Lower leg skin (tissue), 4 donors: ENCODE measurements at regions of chr15 and their contacts with region 1.

Region 1: DNA sequence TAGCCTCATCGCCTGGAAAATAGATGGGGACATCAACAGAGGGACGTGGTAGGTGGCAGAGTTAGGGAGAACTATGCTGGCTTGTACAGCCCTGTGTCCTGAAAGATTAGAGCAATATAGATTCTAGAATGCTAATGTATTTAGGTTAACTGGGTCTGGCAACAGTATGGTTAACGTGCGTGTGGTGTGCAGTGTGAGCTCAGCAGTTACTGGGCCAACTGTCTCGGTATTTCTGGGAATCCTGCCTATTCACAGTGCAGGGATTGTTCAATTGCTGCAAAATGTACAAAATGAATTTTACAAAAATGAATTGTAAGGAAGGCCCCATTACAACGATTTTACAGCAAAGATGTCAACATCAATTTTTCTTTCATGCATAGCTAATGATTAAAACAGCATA is 20.6 kb downstream of the MEIS2 start:
- DNase-seq: no peak
- H3K4me3 ChIP-seq: no peak overlapping the region
- CTCF ChIP-seq: no peak
- POLR2A ChIP-seq: no peak

Region 2: GRCh38 chr15:37028625-37029296 is 51.0 kb before region 1 on chr15:
- intact Hi-C with region 1: loop called (anchors 5 kb)
- DNase-seq: no peak
- H3K4me3 ChIP-seq: no peak overlapping the region
- CTCF ChIP-seq: no peak
- POLR2A ChIP-seq: no peak